Heart right ventricle (tissue), 16 donors: ENCODE measurements at regions of chr7 and their contacts with region 1.

Region 1: DNA sequence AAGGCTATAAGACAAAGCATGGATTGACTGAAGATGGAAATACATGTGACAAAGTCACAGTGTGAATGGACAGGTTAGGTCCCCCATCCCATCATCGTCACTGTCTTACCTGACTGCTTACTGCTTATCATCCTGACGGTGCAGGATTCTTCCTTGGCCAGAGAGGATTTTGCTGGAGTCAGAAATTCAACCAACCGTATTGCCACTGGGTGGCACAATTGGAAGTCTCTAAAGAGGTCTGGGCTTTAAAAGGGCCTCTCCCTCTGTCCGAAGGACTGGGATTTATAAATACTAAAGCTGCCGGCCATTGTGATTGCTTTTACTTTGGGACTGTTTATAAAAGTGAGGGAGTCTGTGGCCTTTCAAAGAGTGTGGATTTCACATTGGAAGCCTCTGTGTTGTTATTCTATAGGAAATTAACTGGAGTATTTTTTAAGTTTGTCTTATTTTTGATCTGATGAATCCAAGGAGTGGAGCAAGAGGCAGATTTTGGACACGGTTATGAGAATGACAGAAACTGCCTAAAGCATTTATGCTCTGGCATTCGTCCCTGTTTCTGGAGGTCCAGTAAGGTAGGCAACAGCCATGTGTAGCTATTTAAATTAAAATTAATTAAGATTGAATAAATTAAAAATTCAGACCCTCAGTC is 113.3 kb upstream of the CREB5 start:
- DNase-seq: peak in 1 of 2 donors; percentile 47
- ATAC-seq: peak; percentile 38 to 83 (median 76)
- H3K4me3 ChIP-seq: no peak overlapping the region
- H3K27ac ChIP-seq: peak overlapping the region in 3 of 10 donors; percentile 10 to 42 (median 14)
- H3K4me1 ChIP-seq: peaks cover 0 to 13% (median 0%) of the 10 kb centered on the region in 9 donors
- H3K27me3 ChIP-seq: peaks cover 0 to 8% (median 0%) of the 10 kb centered on the region in 7 donors
- CTCF ChIP-seq: peak; percentile 19 to 63 (median 48)

Region 2: DNA sequence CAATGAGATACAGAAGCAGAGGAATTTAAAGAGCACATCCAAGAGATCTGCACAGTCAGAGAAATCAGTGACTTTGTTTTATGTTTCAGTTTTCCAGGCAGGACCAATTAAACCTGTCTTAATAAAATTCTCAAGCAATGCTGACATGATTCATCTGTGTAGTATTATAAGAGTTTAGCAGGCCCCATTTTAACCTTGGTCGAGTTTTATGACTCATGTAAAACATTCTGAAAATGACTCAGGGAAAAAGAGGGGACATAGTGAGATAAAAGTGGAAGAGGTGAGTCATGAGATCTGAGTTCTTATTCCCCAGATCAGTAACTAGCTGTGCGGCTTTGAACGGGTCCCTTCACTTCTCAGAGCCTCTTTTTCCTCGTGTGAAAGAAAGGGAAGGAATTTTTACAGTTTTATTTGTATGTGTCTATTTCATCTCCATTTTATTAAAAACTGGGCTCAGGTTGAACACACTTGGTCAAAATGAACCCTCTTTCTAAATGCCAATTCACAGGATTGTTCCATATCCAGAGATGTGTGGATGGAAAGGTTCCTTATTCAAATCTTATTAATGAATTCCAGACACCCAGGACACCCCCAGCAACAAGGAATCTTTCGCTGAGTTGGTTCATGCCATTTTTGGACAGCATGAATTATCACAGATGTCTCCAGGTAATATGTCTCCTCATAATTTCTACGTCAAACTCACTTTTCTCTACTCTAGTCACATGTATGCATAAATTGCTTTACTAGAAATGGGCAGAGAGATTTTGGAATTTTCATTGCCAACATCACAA is 261.6 kb before region 1 on chr7:
- intact Hi-C with region 1: no loop called
- DNase-seq: no peak
- ATAC-seq: peak; percentile 43 to 93 (median 70)
- H3K4me3 ChIP-seq: no peak overlapping the region
- H3K27ac ChIP-seq: peak overlapping the region in 5 of 10 donors; percentile 3 to 42 (median 32)
- H3K4me1 ChIP-seq: peaks cover 0 to 45% (median 11%) of the 10 kb centered on the region in 9 donors
- H3K27me3 ChIP-seq: no peaks in the 10 kb centered on the region
- CTCF ChIP-seq: no peak

Region 3: DNA sequence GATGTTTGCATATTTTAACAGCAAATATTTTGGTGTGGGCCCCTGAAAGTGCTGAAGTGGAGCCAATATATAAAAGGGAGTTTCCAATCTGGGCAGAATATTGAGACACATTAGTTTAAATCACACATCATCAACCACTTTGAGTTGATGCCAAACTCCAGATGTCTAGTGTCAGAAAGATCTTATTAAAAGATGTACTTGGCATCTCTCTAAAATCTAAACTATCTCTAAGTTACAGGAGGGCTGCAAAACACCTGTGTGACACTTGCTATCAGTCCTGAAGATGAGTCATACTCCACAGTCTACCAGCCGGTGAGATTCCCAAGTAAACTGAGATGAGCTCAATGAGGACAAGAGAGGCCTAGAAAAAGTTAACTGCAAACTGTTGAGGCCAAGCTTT is 129.8 kb before region 1 on chr7:
- intact Hi-C with region 1: no loop called
- DNase-seq: no peak
- ATAC-seq: no peak
- H3K4me3 ChIP-seq: no peak overlapping the region
- H3K27ac ChIP-seq: no peak overlapping the region
- H3K4me1 ChIP-seq: peaks cover 0 to 80% (median 30%) of the 10 kb centered on the region in 9 donors
- H3K27me3 ChIP-seq: no peaks in the 10 kb centered on the region
- CTCF ChIP-seq: no peak

Region 4: GRCh38 chr7:28378574-28379149 is 79.7 kb after region 1 on chr7:
- intact Hi-C with region 1: loop called in 2 of 10 experiments (anchors 10 kb)
- DNase-seq: no peak
- ATAC-seq: peak in 1 of 8 donors; percentile 55
- H3K4me3 ChIP-seq: no peak overlapping the region
- H3K27ac ChIP-seq: no peak overlapping the region
- H3K4me1 ChIP-seq: peaks cover 0 to 11% (median 0%) of the 10 kb centered on the region in 9 donors
- H3K27me3 ChIP-seq: peaks cover 0 to 7% (median 0%) of the 10 kb centered on the region in 7 donors
- CTCF ChIP-seq: no peak

Region 5: DNA sequence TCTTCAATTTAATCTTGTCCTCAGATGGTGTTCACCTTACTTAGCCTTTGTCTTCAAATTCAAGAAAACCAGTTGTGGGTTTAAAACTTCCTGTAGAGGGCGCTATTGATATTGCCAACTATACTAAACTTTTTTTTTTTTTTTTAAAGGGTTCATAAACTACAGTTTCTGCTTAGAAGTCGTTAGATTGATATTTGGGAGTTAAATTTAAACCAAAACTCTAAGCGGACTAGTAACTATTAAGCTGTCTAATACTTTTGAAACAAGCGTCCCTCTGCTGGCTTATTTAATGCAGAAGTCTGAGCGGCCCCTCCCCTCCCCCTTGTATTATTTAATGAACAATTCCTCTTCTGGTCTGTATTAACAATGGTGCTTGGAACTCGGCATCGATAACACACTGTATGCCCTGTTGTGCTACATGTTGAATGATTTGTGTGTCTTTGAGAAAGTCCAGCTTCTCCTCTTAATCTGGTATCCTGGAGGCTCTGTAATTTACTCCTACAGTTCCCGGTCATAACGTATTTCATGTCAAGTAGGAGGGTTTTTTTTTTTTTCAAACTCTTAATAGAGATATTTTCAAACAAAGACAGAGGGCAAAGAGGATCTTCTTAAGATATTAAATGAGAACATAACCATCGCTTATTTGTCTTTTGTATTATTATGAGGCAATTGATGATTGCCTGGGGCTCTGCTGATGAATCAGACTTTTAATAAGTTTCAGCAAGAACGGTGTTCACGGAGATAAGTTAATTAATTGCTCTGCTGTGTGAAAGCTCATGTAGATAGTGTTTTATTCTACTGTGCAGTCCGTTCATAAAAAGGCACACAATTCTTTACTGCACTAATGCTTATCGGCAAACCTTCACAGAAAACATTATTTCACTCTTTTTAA is 90.8 kb after region 1 on chr7:
- intact Hi-C with region 1: loop called in 1 of 10 experiments (anchors 10 kb)
- DNase-seq: peak in 1 of 2 donors; percentile 14
- ATAC-seq: peak in 6 of 8 donors; percentile 41 to 64 (median 48)
- H3K4me3 ChIP-seq: peak overlapping the region in 8 of 10 donors; percentile 10 to 48 (median 42)
- H3K27ac ChIP-seq: peak overlapping the region in 5 of 10 donors; percentile 8 to 42 (median 17)
- H3K4me1 ChIP-seq: peaks cover 0 to 6% (median 0%) of the 10 kb centered on the region in 9 donors
- H3K27me3 ChIP-seq: peaks cover 0 to 15% (median 0%) of the 10 kb centered on the region in 7 donors
- CTCF ChIP-seq: peak; percentile 75 to 91 (median 82)

Region 6: GRCh38 chr7:28479507-28479947 is 180.5 kb after region 1 on chr7:
- intact Hi-C with region 1: loop called in 1 of 10 experiments (anchors 5 kb)
- DNase-seq: no peak
- ATAC-seq: peak in 1 of 8 donors; percentile 51
- H3K4me3 ChIP-seq: no peak overlapping the region
- H3K27ac ChIP-seq: no peak overlapping the region
- H3K4me1 ChIP-seq: peaks cover 0 to 46% (median 16%) of the 10 kb centered on the region in 9 donors
- H3K27me3 ChIP-seq: no peaks in the 10 kb centered on the region
- CTCF ChIP-seq: no peak

Region 7: GRCh38 chr7:28626624-28627262 is 327.7 kb after region 1 on chr7:
- intact Hi-C with region 1: loop called in 4 of 10 experiments (anchors 5 to 10 kb)
- DNase-seq: no peak
- ATAC-seq: peak in 1 of 8 donors; percentile 46
- H3K4me3 ChIP-seq: no peak overlapping the region
- H3K27ac ChIP-seq: peak overlapping the region in 5 of 10 donors; percentile 0 to 63 (median 1)
- H3K4me1 ChIP-seq: peaks cover 0 to 84% (median 42%) of the 10 kb centered on the region in 9 donors
- H3K27me3 ChIP-seq: no peaks in the 10 kb centered on the region
- CTCF ChIP-seq: peak; percentile 28 to 79 (median 71)

Region 8: DNA sequence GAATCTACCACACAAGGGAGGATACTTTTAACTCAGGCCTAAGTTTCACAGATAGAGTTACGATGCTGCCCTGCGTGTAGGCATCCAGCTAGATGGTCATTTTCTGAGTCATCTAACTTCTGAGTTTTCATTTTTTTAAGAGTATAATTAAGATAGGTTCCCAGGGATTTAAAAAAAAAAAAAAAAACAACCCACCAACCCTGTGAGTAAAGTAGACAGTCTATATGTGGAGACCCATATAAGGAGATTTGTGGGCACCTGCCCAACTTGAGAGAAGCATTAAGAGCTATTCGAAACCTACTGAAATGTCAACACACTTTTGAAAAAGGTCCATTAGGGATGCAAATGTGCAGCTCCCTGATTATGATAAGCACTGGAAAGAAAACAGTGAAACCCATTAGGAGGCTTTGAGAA is 401.8 kb after region 1 on chr7:
- intact Hi-C with region 1: no loop called
- DNase-seq: no peak
- ATAC-seq: peak in 2 of 8 donors; percentile 14 to 27
- H3K4me3 ChIP-seq: peak overlapping the region in 1 of 10 donors; percentile 6
- H3K27ac ChIP-seq: peak overlapping the region in 5 of 10 donors; percentile 2 to 45 (median 22)
- H3K4me1 ChIP-seq: peaks cover 2 to 66% (median 47%) of the 10 kb centered on the region in 9 donors
- H3K27me3 ChIP-seq: no peaks in the 10 kb centered on the region
- CTCF ChIP-seq: no peak

Region 9: GRCh38 chr7:28879105-28879504 is 580.1 kb after region 1 on chr7:
- intact Hi-C with region 1: loop called in 1 of 10 experiments (anchors 10 kb)
- DNase-seq: no peak
- ATAC-seq: no peak
- H3K4me3 ChIP-seq: no peak overlapping the region
- H3K27ac ChIP-seq: no peak overlapping the region
- H3K4me1 ChIP-seq: peaks cover 0 to 7% (median 0%) of the 10 kb centered on the region in 9 donors
- H3K27me3 ChIP-seq: peaks cover 0 to 27% (median 16%) of the 10 kb centered on the region in 7 donors
- CTCF ChIP-seq: no peak

Region 10: DNA sequence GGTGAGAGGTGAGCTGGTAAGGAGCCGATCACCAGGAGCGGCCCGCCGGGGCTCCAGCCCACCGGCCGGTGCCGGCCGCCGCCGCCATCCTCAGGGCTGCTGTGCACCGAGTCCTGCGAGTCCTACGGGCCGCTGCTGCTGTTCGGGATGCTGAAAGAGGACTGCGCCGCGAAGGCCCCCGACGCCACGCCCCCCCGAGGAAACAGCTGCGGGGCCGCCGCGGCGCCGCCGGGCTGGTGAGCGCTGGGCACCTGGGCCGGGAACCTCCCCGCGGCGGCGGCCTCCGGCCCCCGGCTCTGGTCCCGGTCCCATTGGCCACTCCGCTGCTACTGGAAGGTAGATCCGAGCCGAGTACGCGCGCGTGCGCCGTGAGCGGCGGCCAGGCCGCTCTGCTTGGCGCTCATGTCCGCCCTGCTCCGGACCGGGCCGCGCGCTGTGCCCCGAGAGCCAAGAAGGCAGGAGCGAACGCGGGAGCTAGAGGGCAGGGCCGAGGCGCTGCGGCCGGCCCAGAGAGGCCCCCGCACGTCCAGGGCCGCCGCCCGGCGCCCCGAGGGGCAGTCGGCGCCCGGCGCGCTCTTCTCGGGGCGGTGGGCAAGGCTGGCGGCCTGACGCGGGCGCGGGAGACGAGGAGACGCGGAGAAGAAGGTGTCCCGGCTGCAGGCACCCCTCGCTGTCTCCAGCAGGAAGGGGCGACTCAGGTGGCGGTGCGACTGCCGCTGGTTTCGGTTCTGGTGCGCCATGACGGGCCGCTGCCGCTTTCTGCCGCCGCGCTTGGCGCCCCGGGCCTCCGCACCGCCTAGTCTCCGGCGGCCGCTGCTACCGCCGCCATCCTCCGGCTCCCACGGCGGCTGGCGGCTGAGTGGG is 1386.0 kb after region 1 on chr7:
- intact Hi-C with region 1: no loop called
- DNase-seq: peak; percentile 65 to 84
- ATAC-seq: peak; percentile 87 to 95 (median 92)
- H3K4me3 ChIP-seq: peak overlapping the region; percentile 58 to 98 (median 83)
- H3K27ac ChIP-seq: peak overlapping the region; percentile 90 to 99 (median 98)
- H3K4me1 ChIP-seq: peaks cover 0 to 39% (median 5%) of the 10 kb centered on the region in 9 donors
- H3K27me3 ChIP-seq: no peaks in the 10 kb centered on the region
- CTCF ChIP-seq: peak in 3 of 9 donors; percentile 12 to 37 (median 31)